ENCODE measurements at regions of chr5 and their contacts with region 1.

Region 1: DNA sequence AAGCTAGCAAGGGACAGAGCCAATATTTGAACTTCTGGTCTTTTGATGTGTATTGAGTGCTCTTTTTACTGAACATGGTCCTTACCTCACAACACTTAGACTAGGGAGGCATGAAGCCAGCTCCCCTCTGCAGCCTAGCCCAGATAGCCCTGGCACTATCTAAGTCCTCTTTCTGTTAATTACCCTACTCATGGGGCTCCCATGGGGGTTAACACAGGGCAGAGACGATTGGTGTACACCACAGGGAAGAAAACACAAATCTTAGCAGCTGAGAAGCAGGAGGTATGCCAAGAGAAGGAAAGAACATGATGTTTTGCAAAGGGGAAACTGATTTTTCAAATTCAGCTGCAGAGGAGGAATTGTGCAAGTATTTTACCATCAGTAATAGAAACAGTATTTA is 383.8 kb downstream of the TMEM232 start:
- DNase-seq: no peak
- ATAC-seq: peak; percentile 49
- H3K4me3 ChIP-seq: no peak overlapping the region
- H3K27ac ChIP-seq: no peak overlapping the region
- H3K4me1 ChIP-seq: peaks cover 1 to 6% of the 10 kb centered on the region in 2 donors
- H3K27me3 ChIP-seq: no peaks in the 10 kb centered on the region

Region 2: DNA sequence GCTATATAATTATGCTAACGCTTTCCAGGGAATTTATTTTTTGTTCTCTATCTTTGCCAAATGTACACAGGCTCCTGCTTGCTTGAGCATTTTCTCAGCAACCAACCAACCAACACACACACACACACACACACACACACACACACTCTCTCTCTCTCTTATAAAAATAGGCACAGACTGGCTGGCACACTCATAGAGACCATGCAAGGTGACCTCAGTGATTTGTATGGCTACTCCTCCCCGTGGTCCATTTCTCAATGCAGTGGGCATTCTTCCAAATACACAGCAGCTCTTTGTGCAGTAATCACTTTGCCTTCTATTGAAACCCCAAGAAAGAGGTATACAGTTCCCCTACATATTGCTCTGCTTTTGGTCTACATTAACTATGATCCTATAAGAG is 237.0 kb before region 1 on chr5:
- intact Hi-C with region 1: loop called in 1 of 2 experiments (anchors 10 kb)
- DNase-seq: peak in 1 of 2 donors; percentile 32
- ATAC-seq: peak; percentile 76
- H3K4me3 ChIP-seq: no peak overlapping the region
- H3K27ac ChIP-seq: no peak overlapping the region
- H3K4me1 ChIP-seq: peaks cover 10 to 15% of the 10 kb centered on the region in 2 donors
- H3K27me3 ChIP-seq: no peaks in the 10 kb centered on the region

Measured in aorta (tissue), 5 donors.